ENCODE measurements at regions of chr17 and their contacts with region 1.

Region 1: DNA sequence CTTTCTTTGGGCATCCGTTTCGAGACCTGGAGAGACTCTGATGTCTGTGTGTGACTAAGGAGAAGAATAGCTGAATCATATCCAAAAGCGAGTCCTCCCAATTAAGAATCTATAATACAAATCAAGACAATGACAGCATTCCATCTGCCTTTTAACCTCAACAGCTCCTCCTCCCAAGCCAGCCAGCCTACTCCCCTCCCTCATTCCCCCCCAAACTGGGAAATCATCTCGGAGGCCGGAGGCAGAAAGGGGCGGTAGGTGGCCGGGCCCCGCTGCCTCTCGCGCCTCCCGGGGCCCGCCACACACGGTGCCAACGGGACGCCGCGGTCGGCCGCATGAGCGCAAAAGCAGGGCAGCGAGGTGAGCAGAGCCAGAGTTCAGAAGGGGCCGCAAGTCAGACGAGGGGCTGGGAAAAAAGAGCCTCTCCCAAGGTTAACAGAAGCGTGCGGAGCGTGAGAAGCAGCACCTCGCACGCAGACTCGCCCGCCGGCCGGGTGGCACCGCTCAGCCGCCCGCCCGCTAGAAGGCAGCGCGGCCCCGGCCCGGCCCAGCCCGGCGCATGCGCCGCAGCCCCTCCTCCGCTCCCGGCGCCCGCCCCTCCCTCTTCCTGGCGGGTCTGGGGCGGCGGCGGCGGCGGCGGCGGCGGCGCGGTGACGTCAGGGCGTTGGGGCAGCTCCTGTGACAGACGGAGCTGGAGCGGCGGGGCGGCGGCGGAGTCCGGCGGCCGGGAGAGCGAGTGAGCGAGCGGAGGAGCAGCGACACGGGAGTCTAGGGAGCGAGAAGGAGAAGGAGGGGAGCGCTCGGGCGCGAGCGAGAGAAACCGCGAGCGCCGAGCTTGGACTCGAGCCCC is at the start of gene PAFAH1B1:
- DNase-seq: peak; percentile 90 to 98 (median 94)
- ATAC-seq: peak; percentile 76
- H3K4me3 ChIP-seq: peak within 1 kb of the TSS; percentile 96 to 97
- H3K4me3 Mint-ChIP-seq: peak within 1 kb of the TSS; percentile 87
- H3K27ac ChIP-seq: peak within 1 kb of the TSS; percentile 86 to 97
- H3K27ac Mint-ChIP-seq: peak within 1 kb of the TSS; percentile 95
- H3K4me1 ChIP-seq: peaks cover 25% of the 10 kb centered on the region
- H3K4me1 Mint-ChIP-seq: peaks cover 33% of the 10 kb centered on the region
- H3K27me3 ChIP-seq: no peaks in the 10 kb centered on the region
- H3K27me3 Mint-ChIP-seq: no peaks in the 10 kb centered on the region
- CTCF ChIP-seq: no peak
- total RNA-seq, gene PAFAH1B1: 139 to 157 TPM

Region 2: GRCh38 chr17:2634361-2634960 is 41.3 kb after region 1 on chr17:
- CTCF ChIA-PET with region 1: no interaction called
- POLR2A ChIA-PET with region 1: no interaction called
- intact Hi-C with region 1: loop called in 1 of 2 experiments (anchors 5 kb)
- DNase-seq: no peak
- ATAC-seq: no peak
- H3K4me3 ChIP-seq: no peak overlapping the region
- H3K4me3 Mint-ChIP-seq: no peak overlapping the region
- H3K27ac ChIP-seq: no peak overlapping the region
- H3K27ac Mint-ChIP-seq: peak overlapping the region; percentile 46
- H3K4me1 ChIP-seq: peaks cover 21% of the 10 kb centered on the region
- H3K4me1 Mint-ChIP-seq: peaks cover 70% of the 10 kb centered on the region
- H3K27me3 ChIP-seq: no peaks in the 10 kb centered on the region
- H3K27me3 Mint-ChIP-seq: no peaks in the 10 kb centered on the region
- CTCF ChIP-seq: no peak

Region 3: DNA sequence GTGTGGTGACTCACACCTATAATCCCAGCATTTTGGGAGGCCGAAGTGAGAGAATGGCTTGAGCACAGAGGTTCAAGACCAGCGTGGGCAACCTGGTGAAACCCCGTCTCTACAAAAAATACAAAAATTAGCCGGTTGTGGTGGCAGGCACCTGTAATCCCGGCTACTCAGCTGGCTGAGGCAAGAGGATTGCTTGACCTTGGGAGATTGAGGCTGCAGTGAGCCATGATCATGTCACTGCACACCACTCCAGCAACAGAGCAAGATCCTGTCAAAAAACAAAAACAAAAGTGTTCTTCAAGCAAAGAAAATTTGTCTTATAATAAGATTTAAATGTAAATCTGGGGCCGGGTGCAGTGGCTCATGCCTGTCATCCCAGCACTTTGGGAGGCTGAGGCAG is 51.8 kb after region 1 on chr17:
- CTCF ChIA-PET with region 1: interaction called, 3 read pairs
- POLR2A ChIA-PET with region 1: no interaction called
- intact Hi-C with region 1: loop called in 1 of 2 experiments (anchors 5 kb)
- DNase-seq: no peak
- ATAC-seq: no peak
- H3K4me3 ChIP-seq: no peak overlapping the region
- H3K4me3 Mint-ChIP-seq: no peak overlapping the region
- H3K27ac ChIP-seq: no peak overlapping the region
- H3K27ac Mint-ChIP-seq: no peak overlapping the region
- H3K4me1 ChIP-seq: no peaks in the 10 kb centered on the region
- H3K4me1 Mint-ChIP-seq: peaks cover 20% of the 10 kb centered on the region
- H3K27me3 ChIP-seq: no peaks in the 10 kb centered on the region
- H3K27me3 Mint-ChIP-seq: no peaks in the 10 kb centered on the region
- CTCF ChIP-seq: no peak

Region 4: DNA sequence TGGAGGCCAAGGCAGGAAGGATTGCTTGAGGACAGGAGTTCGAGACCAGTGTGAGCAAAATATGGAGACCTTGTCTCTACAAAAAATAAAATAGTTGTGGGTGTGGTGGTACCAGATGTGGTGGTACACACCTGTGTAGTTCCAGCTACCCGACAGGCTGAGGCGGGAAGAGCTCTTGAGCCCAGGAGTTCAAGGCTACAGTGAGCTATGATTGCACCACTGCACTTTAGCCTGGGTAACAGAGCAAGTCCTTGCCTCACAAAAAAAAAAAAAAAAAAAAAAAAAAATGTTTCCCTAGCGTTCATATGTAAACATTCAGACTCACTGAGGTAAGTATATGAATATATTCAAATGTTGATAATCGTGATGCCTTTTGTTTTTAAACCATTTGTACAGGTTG is 78.8 kb after region 1 on chr17:
- CTCF ChIA-PET with region 1: interaction called, 4 read pairs
- POLR2A ChIA-PET with region 1: no interaction called
- intact Hi-C with region 1: loop called (anchors 1 kb)
- DNase-seq: no peak
- ATAC-seq: no peak
- H3K4me3 ChIP-seq: no peak overlapping the region
- H3K4me3 Mint-ChIP-seq: no peak overlapping the region
- H3K27ac ChIP-seq: no peak overlapping the region
- H3K27ac Mint-ChIP-seq: no peak overlapping the region
- H3K4me1 ChIP-seq: no peaks in the 10 kb centered on the region
- H3K4me1 Mint-ChIP-seq: peaks cover 3% of the 10 kb centered on the region
- H3K27me3 ChIP-seq: no peaks in the 10 kb centered on the region
- H3K27me3 Mint-ChIP-seq: no peaks in the 10 kb centered on the region
- CTCF ChIP-seq: no peak

Region 5: GRCh38 chr17:2688351-2689342 is 95.5 kb after region 1 on chr17:
- CTCF ChIA-PET with region 1: no interaction called
- POLR2A ChIA-PET with region 1: no interaction called
- intact Hi-C with region 1: no loop called
- DNase-seq: peak in 4 of 9 experiments; percentile 10 to 49 (median 31)
- ATAC-seq: no peak
- H3K4me3 ChIP-seq: no peak overlapping the region
- H3K4me3 Mint-ChIP-seq: peak overlapping the region; percentile 15
- H3K27ac ChIP-seq: peak overlapping the region in 1 of 2 experiments; percentile 39
- H3K27ac Mint-ChIP-seq: peak overlapping the region; percentile 72
- H3K4me1 ChIP-seq: peaks cover 7% of the 10 kb centered on the region
- H3K4me1 Mint-ChIP-seq: peaks cover 11% of the 10 kb centered on the region
- H3K27me3 ChIP-seq: no peaks in the 10 kb centered on the region
- H3K27me3 Mint-ChIP-seq: no peaks in the 10 kb centered on the region
- CTCF ChIP-seq: no peak

Measured in CD8-positive, alpha-beta T cell (primary cell).